Heart right ventricle (tissue), 16 donors: ENCODE measurements at regions of chr22 and their contacts with region 1.

Region 1: GRCh38 chr22:49515475-49515874 is 312.2 kb downstream of the BRD1 start:
- DNase-seq: no peak
- ATAC-seq: no peak
- H3K4me3 ChIP-seq: no peak overlapping the region
- H3K27ac ChIP-seq: no peak overlapping the region
- H3K4me1 ChIP-seq: no peaks in the 10 kb centered on the region
- H3K27me3 ChIP-seq: peaks cover 0 to 13% (median 2%) of the 10 kb centered on the region in 7 donors
- CTCF ChIP-seq: no peak

Region 2: DNA sequence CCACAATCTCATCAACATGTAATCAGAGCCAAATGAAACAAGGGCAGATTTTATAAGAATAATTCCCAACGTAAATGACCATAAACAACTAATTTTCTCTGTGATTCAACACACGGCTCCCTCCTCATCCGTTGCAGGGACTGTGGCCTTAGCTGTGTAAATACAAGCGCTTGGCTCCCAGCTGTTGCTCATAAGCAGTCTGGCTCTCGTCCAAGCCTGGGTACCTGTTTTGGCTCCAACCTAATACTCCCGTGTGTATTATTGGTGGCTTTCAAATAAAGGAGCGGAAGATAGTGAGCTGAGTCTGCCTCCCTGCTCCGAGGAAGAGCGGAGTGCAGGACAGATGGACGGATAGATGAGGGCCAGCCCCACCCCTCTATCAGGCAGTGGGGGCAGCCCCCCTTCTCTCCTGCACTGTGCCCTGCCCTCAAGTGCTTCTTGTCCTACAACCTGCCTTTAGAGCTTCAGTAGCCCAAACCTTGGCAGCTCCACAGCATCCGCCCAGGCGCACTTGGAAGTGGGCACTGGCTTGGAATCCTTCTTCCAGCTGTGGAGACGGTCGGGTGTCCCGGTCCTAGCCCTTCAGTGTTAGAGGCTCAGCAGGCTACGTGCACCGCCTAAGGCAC is 358.7 kb before region 1 on chr22:
- intact Hi-C with region 1: no loop called
- DNase-seq: no peak
- ATAC-seq: no peak
- H3K4me3 ChIP-seq: no peak overlapping the region
- H3K27ac ChIP-seq: no peak overlapping the region
- H3K4me1 ChIP-seq: no peaks in the 10 kb centered on the region
- H3K27me3 ChIP-seq: peaks cover 0 to 60% (median 44%) of the 10 kb centered on the region in 7 donors
- CTCF ChIP-seq: no peak

Region 3: DNA sequence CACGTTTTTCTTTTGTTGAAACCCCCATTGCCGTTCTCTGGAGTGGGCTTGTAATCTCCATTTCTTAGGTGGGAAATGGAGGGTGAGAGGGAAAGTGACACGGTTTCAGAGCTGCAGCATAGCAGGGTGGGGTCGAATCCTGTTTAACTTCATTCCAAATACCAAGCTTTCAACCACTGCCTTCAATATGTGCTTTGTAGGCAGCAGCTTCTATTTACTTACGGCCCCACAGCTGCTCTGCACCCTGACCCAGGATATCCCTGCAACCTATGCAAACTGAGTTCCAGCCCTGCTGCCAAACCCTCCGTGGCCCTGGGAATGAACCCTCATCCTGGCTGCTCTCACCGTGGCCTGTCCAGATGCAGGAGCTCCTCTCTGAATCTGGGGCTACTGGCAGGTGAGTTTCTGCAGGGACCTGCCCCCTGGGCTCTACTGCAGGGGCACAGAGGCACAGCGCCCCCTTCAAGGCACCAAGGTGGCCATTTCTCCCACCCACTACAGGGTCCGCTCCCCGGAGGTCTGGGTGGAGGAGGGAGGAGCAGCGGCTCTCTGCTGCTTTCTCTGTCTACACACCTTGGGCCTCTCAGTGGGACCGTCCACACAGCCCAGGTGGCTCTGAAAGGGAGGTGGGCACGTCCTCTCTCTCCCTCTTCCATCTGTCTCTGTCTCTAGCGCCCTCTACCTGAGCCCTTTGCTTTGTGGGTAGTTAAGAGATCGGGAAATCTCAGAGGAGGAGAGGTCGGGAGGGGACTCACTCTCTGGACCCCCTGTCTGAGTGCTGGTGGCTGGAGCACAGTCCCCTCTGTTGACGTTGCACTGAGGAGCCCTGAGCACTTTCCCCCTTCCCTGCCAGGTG is 33.1 kb after region 1 on chr22:
- intact Hi-C with region 1: no loop called
- DNase-seq: no peak
- ATAC-seq: peak in 1 of 8 donors; percentile 16
- H3K4me3 ChIP-seq: no peak overlapping the region
- H3K27ac ChIP-seq: no peak overlapping the region
- H3K4me1 ChIP-seq: no peaks in the 10 kb centered on the region
- H3K27me3 ChIP-seq: peaks cover 0 to 16% (median 0%) of the 10 kb centered on the region in 7 donors
- CTCF ChIP-seq: no peak

Region 4: DNA sequence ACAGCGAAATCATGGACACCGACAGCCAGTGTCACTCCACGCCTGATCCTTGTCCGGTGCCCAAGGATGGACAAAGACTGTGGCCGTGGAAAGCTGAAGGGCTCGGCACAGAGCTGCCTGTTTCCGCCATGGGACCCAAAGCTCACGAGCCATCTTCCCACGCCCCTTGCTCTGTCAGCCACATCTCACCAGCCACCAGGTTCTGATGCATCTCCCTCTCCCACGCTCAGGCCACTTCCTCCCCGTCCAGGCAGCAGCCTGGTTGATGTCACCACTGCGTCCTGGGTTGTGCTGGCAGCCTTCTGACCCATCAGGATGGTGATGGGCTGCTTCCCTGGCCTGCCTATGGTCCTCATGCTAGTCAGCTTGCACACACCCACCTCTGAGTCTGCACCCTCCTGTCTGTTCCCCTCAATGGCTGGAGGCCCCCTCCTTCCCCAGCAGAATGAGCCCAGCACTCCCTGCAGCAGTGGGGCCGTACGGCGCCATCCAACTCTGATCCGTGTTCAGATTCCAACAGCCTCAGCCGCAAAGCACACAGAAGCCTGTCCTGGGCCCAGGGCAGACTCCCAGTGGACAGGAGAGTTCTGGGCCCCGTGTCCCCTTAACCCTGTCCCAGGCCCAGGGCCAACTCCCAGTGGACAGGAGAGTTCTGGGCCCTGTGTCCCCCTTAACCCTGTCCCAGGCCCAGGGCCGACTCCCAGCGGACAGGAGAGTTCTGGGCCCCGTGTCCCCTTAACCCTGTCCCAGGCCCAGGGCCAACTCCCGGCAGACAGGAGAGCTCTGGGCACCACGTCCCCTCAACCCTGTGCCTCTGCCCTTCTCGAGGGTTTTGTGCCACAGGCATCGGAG is 52.6 kb after region 1 on chr22:
- intact Hi-C with region 1: loop called in 1 of 10 experiments (anchors 5 kb)
- DNase-seq: no peak
- ATAC-seq: peak in 1 of 8 donors; percentile 20
- H3K4me3 ChIP-seq: no peak overlapping the region
- H3K27ac ChIP-seq: no peak overlapping the region
- H3K4me1 ChIP-seq: no peaks in the 10 kb centered on the region
- H3K27me3 ChIP-seq: peaks cover 0 to 3% (median 0%) of the 10 kb centered on the region in 7 donors
- CTCF ChIP-seq: no peak

Region 5: DNA sequence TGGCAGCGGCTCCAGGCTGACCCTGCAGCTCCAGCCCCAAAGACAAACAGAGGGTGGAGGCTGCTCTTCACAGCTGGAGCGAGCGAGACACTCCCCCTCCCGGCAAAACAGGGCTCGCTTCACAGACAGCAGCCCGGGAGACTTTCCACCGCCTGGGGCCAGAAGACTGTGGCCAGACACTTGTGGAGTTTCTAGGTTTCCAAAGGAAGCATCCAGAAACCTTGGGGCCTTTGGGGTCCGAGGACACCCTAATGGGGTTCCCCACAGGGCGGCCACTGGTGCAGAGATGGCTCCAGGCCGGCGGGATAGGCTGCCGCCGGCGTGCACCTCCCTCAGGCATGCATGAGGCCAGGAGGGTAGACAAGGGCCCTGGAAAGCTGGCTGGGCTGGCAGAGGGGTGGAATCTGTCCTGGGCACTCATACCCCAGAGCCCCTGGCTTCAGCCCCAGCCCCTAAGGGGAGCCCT is 497.3 kb after region 1 on chr22 and contains the start of gene IL17REL:
- intact Hi-C with region 1: no loop called
- DNase-seq: no peak
- ATAC-seq: peak in 4 of 8 donors; percentile 31 to 54 (median 40)
- H3K4me3 ChIP-seq: no peak within 1 kb of the TSS
- H3K27ac ChIP-seq: no peak within 1 kb of the TSS
- H3K4me1 ChIP-seq: peaks cover 0 to 12% (median 6%) of the 10 kb centered on the region in 9 donors
- H3K27me3 ChIP-seq: peaks cover 39 to 93% (median 84%) of the 10 kb centered on the region in 7 donors
- CTCF ChIP-seq: peak in 5 of 9 donors; percentile 14 to 42 (median 27)
- total RNA-seq, gene IL17REL: 0.11 TPM in 1 of 10 donors, not detected in the others